ENCODE measurements at regions of chr6 and their contacts with region 1.

Region 1: DNA sequence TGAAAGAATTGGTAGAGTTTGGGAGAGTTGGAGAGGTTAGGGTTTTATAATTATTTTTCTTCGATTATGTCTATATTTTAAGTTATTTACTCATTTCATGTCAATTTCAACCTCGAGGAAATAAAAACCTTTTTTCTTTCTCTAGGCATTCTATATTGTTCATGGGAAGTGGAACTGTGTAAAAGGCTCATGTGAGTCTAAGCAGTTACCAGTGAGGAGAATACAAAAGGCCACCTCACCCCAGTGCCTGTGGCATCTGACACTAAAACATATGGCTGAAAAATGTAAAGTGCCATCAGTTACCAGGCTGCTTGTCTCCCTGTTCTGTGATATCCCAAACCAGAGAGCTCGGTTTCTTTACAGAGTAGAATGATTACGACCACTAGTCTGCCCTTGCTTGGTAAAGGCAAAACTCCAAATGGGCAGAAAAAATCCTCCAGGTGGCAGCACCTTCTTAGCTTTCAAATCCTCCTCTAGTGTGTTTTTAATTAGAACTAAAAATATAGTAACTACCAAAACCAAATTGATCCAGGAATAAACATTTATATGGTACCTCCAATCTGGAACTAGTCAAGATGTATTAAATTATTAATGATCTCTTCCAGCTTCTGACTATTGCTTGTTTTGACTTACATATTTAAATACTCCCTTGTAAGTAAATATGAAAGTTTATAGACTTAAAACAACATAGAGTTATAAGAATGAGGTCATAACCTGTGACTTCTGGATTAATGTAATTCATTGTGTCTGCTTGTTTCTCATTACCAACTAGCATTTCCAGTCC is 122.6 kb upstream of the MCHR2 start:
- DNase-seq: peak; percentile 45
- H3K4me3 ChIP-seq: no peak overlapping the region
- H3K27ac ChIP-seq: no peak overlapping the region
- H3K4me1 ChIP-seq: no peaks in the 10 kb centered on the region
- H3K27me3 ChIP-seq: no peaks in the 10 kb centered on the region
- CTCF ChIP-seq: peak; percentile 71 to 74

Region 2: GRCh38 chr6:100152201-100152600 is 35.6 kb after region 1 on chr6:
- CTCF ChIA-PET with region 1: no interaction called
- dilution Hi-C with region 1: no loop called
- in situ Hi-C with region 1: no loop called
- intact Hi-C with region 1: no loop called
- DNase-seq: no peak
- H3K4me3 ChIP-seq: no peak overlapping the region
- H3K27ac ChIP-seq: no peak overlapping the region
- H3K4me1 ChIP-seq: no peaks in the 10 kb centered on the region
- H3K27me3 ChIP-seq: no peaks in the 10 kb centered on the region
- CTCF ChIP-seq: no peak

Region 3: DNA sequence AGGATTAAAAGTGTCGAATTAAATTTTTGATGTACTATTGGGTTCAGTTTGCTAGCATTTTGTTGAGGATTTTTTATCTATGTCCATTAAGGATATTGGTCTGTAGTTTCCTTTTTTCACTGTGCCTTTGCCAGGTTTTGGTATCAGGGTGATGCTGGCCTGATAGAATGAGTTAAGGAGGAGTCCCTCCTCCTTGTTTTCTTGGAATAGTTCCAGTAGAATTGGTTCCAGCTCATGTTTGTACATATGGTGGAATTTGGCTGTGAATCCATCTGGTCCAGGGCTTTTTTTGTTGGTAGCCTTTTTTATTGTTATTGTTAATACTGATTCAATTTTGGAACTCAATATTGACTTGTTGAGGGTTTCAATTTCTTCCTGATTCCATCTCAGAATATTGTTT is 206.3 kb after region 1 on chr6:
- CTCF ChIA-PET with region 1: no interaction called
- dilution Hi-C with region 1: no loop called
- in situ Hi-C with region 1: no loop called
- intact Hi-C with region 1: loop called (anchors 1 kb)
- DNase-seq: no peak
- H3K4me3 ChIP-seq: no peak overlapping the region
- H3K27ac ChIP-seq: no peak overlapping the region
- H3K4me1 ChIP-seq: no peaks in the 10 kb centered on the region
- H3K27me3 ChIP-seq: no peaks in the 10 kb centered on the region
- CTCF ChIP-seq: no peak

Region 4: DNA sequence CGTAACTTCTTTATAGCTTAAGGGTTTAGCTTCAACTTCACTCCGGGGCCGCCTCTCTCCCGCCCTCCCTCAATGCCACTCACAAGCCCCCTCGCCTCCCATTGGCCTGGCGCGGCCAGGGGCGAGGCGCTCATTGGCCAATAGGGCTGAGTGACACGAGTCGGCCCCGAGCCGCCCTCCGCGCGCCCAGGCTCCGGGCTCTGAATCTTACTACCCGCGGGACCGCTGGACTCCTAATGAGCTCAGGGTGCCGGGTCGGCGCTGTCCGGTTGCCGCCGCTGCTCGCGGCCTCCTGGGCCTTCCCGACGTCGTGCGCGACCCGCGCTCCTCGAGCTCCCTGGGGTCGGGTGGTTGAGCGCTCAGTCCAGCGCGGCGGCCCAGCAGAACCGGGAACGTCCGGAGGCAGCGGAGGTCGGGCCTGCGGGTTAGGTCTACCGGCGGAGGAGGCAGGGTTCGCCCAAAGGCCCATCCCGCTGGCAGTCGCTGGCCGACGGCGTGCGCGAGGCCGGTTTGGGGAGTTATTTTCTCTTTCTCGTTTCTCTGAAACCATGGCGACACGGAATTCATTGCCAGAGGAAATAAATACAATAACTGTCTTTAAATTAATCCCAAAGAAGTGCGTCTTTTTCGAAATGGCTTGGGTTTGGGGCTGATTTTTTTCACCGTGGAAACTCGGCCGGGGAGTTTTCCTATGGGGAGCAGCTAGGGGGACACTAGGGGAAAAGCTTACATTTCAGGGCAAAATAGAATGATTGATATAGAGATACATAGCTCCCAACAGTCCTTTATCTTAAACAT is 348.5 kb after region 1 on chr6 and contains the start of gene SIM1:
- CTCF ChIA-PET with region 1: no interaction called
- dilution Hi-C with region 1: loop called (anchors 25 kb)
- in situ Hi-C with region 1: no loop called
- intact Hi-C with region 1: no loop called
- DNase-seq: peak; percentile 53
- H3K4me3 ChIP-seq: peak within 1 kb of the TSS in 2 of 3 experiments; percentile 19 to 38
- H3K27ac ChIP-seq: no peak within 1 kb of the TSS
- H3K4me1 ChIP-seq: peaks cover 11% of the 10 kb centered on the region
- H3K27me3 ChIP-seq: peaks cover 83% of the 10 kb centered on the region
- CTCF ChIP-seq: no peak
- total RNA-seq, gene SIM1: under 0.01 TPM in 1 of 2 donors, not detected in the other

Region 5: DNA sequence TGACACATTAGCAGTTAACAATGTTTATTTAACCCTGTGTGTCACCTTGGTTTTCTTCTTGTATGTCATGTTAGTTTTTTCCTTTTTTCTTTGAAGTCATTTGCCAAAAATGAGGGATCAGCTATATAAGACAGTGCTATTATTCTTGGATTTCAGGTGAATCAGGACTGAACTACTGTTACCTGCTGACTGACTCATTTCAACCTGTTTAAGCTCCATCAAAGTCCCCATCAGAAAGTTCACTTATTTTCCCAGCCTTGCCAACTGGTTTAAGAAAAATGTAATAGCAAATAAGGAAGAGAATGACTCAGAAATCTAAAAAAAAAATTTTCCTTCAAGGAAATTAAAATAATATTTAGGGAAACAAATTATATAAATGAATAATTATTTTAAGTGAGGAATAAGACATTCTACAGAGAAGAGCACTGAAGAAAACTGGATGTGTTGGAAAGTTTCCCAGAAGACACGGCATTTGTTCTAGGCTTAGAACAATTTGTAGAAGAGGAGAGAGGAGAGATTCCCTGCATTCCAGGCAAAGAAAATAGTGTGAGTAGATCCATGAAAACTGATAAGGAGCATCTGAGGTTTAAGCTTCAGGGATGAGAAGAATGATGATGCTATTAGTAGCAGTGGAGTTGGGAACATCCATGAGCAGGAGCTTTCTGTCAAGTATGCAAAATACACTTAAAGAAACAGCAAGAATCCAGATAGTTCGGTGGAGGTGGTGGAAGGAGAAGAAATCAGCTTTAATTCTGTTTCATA is 433.0 kb after region 1 on chr6:
- CTCF ChIA-PET with region 1: no interaction called
- dilution Hi-C with region 1: no loop called
- in situ Hi-C with region 1: no loop called
- intact Hi-C with region 1: no loop called
- DNase-seq: no peak
- H3K4me3 ChIP-seq: no peak overlapping the region
- H3K27ac ChIP-seq: no peak overlapping the region
- H3K4me1 ChIP-seq: no peaks in the 10 kb centered on the region
- H3K27me3 ChIP-seq: no peaks in the 10 kb centered on the region
- CTCF ChIP-seq: no peak

Region 6: DNA sequence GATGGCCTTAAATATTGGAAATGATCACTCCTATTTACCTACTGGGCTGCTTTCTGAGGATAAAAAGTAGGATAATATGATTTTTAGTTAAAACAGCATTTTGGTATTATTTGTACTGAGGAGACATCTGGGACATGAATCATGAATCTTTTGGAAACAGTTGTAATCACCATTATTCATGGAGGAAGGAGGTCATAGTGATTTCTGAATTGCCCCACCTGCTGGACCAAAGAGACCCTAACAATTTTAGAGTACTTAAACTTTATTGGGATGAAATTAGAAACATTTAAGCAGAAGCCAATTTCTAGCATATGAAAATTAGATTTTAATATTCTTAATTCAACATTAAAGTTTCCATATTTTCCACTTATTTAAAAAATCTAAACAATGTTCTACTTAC is 456.6 kb after region 1 on chr6:
- CTCF ChIA-PET with region 1: no interaction called
- dilution Hi-C with region 1: no loop called
- in situ Hi-C with region 1: no loop called
- intact Hi-C with region 1: loop called (anchors 10 kb)
- DNase-seq: peak; percentile 11
- H3K4me3 ChIP-seq: no peak overlapping the region
- H3K27ac ChIP-seq: no peak overlapping the region
- H3K4me1 ChIP-seq: no peaks in the 10 kb centered on the region
- H3K27me3 ChIP-seq: no peaks in the 10 kb centered on the region
- CTCF ChIP-seq: peak; percentile 31 to 41

Region 7: DNA sequence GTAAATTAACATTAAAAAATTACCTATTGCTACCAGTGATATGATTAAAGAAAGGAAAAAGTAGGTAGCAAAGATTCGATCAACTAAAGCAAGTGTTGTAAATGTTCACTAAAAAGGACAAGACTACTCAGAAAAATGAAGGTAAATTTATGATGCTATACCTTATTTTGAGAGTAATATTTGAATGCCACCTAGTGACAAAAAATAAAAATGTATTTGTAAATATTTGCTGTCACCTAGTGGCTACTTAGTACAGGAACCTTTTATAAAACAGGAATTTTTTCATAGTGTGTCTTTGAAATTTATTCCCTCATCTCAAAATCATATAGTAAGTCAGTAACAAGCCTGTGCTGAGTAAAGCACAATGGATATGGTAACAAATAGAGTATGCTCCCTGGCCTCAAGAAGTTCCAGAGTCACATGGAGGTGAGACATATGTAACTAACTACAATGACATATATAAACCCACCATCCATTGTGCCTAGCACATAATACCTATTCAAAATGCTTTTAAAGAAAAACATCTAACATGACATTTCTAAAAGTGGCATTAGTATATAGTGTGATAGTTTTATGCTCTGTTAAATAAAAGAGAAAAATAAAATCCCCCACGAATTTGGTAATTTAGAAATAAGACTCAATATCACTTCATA is 541.2 kb after region 1 on chr6:
- CTCF ChIA-PET with region 1: no interaction called
- dilution Hi-C with region 1: no loop called
- in situ Hi-C with region 1: loop called (anchors 10 to 25 kb)
- intact Hi-C with region 1: loop called (anchors 2 kb)
- DNase-seq: no peak
- H3K4me3 ChIP-seq: no peak overlapping the region
- H3K27ac ChIP-seq: no peak overlapping the region
- H3K4me1 ChIP-seq: peaks cover 2% of the 10 kb centered on the region
- H3K27me3 ChIP-seq: no peaks in the 10 kb centered on the region
- CTCF ChIP-seq: peak; percentile 63 to 64

Region 8: DNA sequence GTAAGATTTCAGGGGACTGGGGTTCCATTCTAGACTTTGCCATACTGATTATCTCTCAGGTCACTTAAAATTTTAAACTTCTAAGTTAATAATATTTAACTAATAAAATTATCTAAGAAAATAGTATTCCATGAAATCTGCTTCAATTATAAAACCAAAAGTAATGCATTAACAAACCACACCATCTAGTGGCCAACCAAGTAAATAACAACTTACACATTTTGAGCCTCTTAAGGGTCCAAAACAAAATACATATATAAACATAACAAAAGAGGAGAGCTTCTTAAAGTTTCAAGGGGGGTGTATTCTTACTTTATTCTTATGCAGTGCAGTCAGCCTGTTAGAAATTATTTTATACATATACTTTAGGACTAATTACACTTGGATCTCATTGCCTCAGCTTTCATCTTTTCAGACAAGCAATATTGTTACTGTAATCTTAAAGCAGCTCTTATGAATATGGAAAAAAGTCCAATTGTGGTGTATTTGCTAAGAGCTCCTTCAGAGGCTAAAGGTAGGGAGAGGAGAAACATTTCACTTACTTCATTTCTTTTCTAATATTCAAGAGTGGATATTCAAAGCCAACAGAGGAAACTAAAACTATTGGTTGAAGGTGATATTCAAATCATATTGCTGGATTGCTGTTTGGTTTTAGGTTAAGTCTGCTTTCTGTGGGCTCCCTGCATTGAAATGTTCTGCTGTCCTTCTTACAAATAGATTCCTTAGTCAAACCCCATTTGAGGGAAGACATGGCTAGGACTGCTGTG is 547.9 kb after region 1 on chr6:
- CTCF ChIA-PET with region 1: no interaction called
- dilution Hi-C with region 1: no loop called
- in situ Hi-C with region 1: loop called (anchors 10 to 25 kb)
- intact Hi-C with region 1: no loop called
- DNase-seq: peak; percentile 17
- H3K4me3 ChIP-seq: no peak overlapping the region
- H3K27ac ChIP-seq: peak overlapping the region; percentile 93
- H3K4me1 ChIP-seq: peaks cover 13% of the 10 kb centered on the region
- H3K27me3 ChIP-seq: no peaks in the 10 kb centered on the region
- CTCF ChIP-seq: peak; percentile 51 to 65

Region 9: DNA sequence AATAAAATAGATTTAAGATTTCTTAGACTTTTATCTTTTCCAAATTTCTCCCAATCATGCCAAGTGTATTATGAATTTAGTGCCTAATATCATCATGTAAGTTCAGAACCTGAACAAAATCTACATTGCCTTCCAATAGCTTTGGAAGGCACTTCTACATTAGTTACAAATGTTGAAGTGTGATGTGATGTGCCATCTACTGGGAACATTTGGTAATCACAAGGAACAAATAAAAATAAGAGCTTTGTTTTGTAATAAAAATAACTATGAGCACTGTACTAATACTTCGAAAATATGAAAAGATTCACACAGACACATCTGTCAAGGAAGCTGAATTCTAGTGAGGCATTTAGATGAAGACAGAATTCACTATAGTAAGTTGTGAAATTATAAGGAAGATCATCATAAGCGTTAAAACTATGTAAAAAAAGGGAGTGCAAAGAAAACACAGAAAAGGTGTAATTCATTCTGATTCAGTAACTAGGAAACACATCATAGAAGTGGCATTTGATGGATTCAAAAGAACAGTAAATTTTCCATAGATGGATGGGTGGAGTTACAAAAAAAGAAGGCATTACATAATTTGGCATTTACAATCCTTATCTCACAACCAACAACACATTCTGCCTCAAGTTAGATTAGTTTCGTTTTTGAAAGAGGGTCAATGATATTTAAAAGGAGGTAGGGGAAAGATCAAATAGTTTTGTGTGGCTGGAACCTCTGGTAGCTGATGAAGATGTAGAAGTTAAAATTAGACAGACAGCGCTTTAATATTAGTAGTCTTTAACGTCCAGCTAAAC is 603.5 kb after region 1 on chr6:
- CTCF ChIA-PET with region 1: no interaction called
- dilution Hi-C with region 1: no loop called
- in situ Hi-C with region 1: no loop called
- intact Hi-C with region 1: loop called (anchors 5 kb)
- DNase-seq: peak; percentile 12
- H3K4me3 ChIP-seq: no peak overlapping the region
- H3K27ac ChIP-seq: no peak overlapping the region
- H3K4me1 ChIP-seq: no peaks in the 10 kb centered on the region
- H3K27me3 ChIP-seq: no peaks in the 10 kb centered on the region
- CTCF ChIP-seq: peak; percentile 44 to 54